ENCODE measurements at regions of chr14 and their contacts with region 1.

Region 1: DNA sequence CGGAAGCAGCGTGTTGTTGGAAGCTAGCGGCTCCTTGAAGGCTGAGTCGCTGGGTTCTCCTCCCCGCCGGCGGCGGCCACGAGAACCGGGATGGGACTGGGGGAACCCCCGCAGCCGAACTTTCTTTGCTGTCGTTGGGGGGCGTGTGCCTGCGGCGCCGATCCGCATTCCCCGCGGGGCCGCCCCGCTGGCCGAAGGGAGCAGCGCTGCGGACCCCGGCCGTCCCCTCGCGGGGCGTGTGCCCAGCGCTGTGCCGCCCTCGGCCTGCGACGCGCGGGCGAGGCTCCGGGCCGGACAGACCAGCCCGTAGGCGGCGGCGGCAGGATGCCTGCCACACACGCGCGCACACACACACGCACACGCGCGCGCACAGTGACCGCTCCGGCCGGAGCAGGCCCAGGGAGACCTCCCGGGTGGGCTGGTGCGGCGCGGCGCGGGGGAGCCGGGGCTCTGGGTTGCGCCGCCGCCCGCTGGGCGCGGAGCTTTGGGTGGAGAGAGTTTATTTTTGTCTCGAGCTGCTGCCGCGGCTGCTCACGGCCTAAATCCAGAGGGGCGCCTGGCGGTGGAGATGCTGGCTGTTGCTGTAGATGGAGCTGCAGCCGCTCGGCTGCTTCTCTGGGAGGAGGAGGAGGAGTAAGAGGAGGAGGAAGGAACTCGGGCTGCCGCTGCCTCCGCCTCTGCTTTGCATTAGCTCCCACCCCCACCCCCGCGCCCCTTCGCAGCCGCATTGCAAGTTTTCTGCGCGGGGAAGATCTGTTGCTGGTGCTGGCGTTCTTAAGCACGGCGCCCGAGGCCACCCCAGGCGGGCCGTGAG is at the start of gene SAMD4A:
- DNase-seq: peak; percentile 81 to 82
- ATAC-seq: peak; percentile 37 to 66 (median 52)
- H3K4me3 ChIP-seq: peak within 1 kb of the TSS; percentile 54 to 92 (median 83)
- H3K27ac ChIP-seq: peak within 1 kb of the TSS; percentile 92 to 100 (median 98)
- H3K4me1 ChIP-seq: peaks cover 0 to 56% (median 38%) of the 10 kb centered on the region in 9 donors
- H3K27me3 ChIP-seq: peaks cover 0 to 42% (median 0%) of the 10 kb centered on the region in 7 donors
- CTCF ChIP-seq: peak in 7 of 9 donors; percentile 14 to 60 (median 44)
- total RNA-seq, gene SAMD4A: 141 to 284 (median 233) TPM

Region 2: GRCh38 chr14:53979747-53980642 is 586.6 kb before region 1 on chr14:
- intact Hi-C with region 1: no loop called
- DNase-seq: peak in 1 of 2 donors; percentile 25
- ATAC-seq: peak in 3 of 8 donors; percentile 27 to 51 (median 40)
- H3K4me3 ChIP-seq: no peak overlapping the region
- H3K27ac ChIP-seq: no peak overlapping the region
- H3K4me1 ChIP-seq: peaks cover 0 to 18% (median 6%) of the 10 kb centered on the region in 9 donors
- H3K27me3 ChIP-seq: no peaks in the 10 kb centered on the region
- CTCF ChIP-seq: no peak

Region 3: DNA sequence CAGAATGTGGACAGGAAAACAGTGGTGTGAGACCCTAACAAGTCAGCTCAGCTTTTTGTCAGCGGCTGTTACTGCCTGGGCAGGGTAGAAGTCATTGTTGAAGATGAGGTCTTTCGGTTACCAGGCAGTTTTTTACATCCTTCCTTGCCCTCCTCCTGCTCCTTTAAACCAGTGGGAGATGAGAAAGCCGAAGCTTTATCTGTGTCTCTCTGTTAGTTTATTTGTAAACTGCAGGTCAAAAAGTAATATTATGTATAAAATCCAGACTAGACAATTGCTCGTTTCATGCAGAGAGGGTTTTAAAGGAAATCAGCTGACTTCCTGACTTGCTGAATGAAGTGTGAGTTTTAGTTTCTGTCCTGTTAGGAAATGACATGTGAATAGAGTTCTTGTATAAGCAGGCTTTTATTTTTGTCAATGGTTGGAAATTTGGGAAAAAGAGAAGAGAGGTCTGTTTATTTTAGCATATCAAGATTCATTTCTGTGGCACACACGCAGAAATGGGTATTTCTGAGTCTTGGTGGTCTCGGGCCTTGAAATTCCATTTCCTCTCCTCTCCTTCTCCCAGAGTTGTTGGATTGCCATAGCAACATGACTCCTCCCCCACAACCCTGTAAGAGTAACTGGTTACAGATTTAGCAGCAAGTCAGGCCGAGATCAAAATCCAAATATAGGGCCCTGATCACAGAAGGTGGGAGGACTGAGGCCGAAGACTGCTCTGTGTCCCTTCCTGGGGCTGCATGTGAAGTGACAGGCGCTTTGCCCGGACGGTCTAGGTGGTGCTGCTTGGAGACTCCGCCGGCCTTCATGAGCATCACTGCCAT is 61.1 kb after region 1 on chr14:
- intact Hi-C with region 1: loop called in 4 of 10 experiments (anchors 5 to 10 kb)
- DNase-seq: peak; percentile 33 to 85
- ATAC-seq: peak; percentile 82 to 94 (median 90)
- H3K4me3 ChIP-seq: peak overlapping the region in 9 of 10 donors; percentile 4 to 50 (median 26)
- H3K27ac ChIP-seq: peak overlapping the region; percentile 38 to 92 (median 78)
- H3K4me1 ChIP-seq: peaks cover 6 to 67% (median 63%) of the 10 kb centered on the region in 9 donors
- H3K27me3 ChIP-seq: no peaks in the 10 kb centered on the region
- CTCF ChIP-seq: no peak

Region 4: DNA sequence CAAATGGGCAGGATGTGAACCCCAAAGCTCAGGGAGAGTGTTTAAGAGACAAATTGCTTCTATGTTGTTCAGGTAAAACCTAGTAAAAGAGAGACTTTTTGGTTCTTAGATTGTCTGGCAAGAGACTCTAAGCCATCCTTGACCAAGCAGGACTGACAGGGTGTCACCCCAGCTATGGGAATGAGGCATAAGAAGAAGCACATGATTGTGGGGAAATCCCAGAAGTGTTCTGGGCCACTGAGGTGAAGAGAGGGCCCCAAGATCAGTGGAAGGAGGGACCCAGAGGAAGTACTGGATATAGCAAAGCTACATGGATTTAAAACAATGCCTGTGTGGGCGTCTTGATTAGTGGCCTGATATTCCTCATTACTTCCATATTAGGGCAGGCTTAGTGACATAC is 99.3 kb after region 1 on chr14:
- intact Hi-C with region 1: no loop called
- DNase-seq: no peak
- ATAC-seq: no peak
- H3K4me3 ChIP-seq: no peak overlapping the region
- H3K27ac ChIP-seq: peak overlapping the region in 6 of 10 donors; percentile 5 to 43 (median 22)
- H3K4me1 ChIP-seq: peaks cover 2 to 95% (median 65%) of the 10 kb centered on the region in 9 donors
- H3K27me3 ChIP-seq: no peaks in the 10 kb centered on the region
- CTCF ChIP-seq: no peak

Region 5: DNA sequence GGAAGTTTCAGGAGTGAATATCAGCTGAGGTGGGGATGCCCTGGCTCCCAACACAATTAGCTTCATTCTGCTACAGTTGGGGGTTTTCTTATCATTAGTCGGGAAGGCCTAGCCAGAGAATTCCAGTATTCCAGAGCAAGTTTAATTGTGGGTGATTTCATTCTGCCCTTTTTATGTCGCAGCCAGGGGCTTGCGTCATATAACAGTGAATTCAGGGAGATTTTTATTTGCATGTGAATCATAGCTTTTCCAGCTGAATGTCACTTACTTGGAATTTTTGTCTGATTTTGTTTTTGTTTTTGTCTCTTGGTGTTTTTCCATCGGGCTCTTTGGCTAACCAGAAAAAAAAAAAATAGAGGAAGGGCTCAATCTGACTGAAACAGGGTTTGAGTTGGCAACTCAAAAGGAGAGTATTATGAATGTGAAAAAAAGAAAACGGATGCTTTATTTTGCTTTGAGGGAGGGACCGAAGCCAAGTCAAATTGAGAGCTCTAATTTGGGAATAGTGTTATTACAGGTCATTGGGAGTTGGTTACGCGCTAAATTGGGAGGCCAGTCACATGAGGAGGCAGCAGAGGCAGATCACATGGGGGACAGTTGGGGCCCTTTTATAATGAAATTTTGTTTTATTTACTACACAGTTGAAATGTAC is 119.7 kb after region 1 on chr14:
- intact Hi-C with region 1: loop called in 9 of 10 experiments (anchors 1 to 5 kb)
- DNase-seq: peak in 1 of 2 donors; percentile 82
- ATAC-seq: peak; percentile 56 to 84 (median 76)
- H3K4me3 ChIP-seq: peak overlapping the region in 5 of 10 donors; percentile 0 to 23 (median 16)
- H3K27ac ChIP-seq: peak overlapping the region; percentile 63 to 96 (median 88)
- H3K4me1 ChIP-seq: peaks cover 18 to 94% (median 78%) of the 10 kb centered on the region in 9 donors
- H3K27me3 ChIP-seq: no peaks in the 10 kb centered on the region
- CTCF ChIP-seq: no peak

Region 6: GRCh38 chr14:54773171-54773975 is 206.8 kb after region 1 on chr14:
- intact Hi-C with region 1: loop called (anchors 1 to 5 kb)
- DNase-seq: peak; percentile 64 to 93
- ATAC-seq: peak; percentile 77 to 91 (median 84)
- H3K4me3 ChIP-seq: peak overlapping the region in 3 of 10 donors; percentile 1 to 12 (median 1)
- H3K27ac ChIP-seq: peak overlapping the region; percentile 45 to 96 (median 91)
- H3K4me1 ChIP-seq: peaks cover 15 to 96% (median 64%) of the 10 kb centered on the region in 9 donors
- H3K27me3 ChIP-seq: no peaks in the 10 kb centered on the region
- CTCF ChIP-seq: peak; percentile 35 to 78 (median 62)

Region 7: DNA sequence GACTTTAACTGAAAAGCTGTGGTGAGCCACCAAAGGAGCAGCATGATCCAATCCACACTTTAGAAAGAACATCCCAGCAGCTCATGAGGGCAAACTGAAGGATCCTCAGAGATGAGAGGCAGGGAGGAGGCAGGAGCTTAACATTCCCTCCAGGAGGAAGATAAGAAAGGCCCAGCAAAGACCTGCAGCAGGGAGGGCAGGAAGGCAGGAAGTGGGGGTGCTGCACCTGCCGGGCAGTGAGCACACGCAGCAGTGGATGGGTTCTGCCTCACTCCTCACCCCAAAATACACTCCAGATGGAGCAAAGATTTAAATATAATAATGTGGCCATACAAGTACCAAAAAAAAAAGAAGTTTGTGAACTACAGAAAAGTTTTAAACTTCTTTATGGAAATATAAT is 287.6 kb after region 1 on chr14:
- intact Hi-C with region 1: no loop called
- DNase-seq: no peak
- ATAC-seq: no peak
- H3K4me3 ChIP-seq: no peak overlapping the region
- H3K27ac ChIP-seq: no peak overlapping the region
- H3K4me1 ChIP-seq: peaks cover 0 to 30% (median 5%) of the 10 kb centered on the region in 9 donors
- H3K27me3 ChIP-seq: no peaks in the 10 kb centered on the region
- CTCF ChIP-seq: no peak

Region 8: GRCh38 chr14:54893151-54893760 is 326.6 kb after region 1 on chr14:
- intact Hi-C with region 1: loop called in 5 of 10 experiments (anchors 5 to 10 kb)
- DNase-seq: peak in 1 of 2 donors; percentile 45
- ATAC-seq: peak in 4 of 8 donors; percentile 29 to 58 (median 46)
- H3K4me3 ChIP-seq: no peak overlapping the region
- H3K27ac ChIP-seq: no peak overlapping the region
- H3K4me1 ChIP-seq: peaks cover 0 to 10% (median 0%) of the 10 kb centered on the region in 9 donors
- H3K27me3 ChIP-seq: no peaks in the 10 kb centered on the region
- CTCF ChIP-seq: peak; percentile 58 to 84 (median 77)

Measured in heart right ventricle (tissue), 16 donors.